Motor neuron (in vitro differentiated cells): ENCODE measurements at regions of chr2 and their contacts with region 1.

Region 1: DNA sequence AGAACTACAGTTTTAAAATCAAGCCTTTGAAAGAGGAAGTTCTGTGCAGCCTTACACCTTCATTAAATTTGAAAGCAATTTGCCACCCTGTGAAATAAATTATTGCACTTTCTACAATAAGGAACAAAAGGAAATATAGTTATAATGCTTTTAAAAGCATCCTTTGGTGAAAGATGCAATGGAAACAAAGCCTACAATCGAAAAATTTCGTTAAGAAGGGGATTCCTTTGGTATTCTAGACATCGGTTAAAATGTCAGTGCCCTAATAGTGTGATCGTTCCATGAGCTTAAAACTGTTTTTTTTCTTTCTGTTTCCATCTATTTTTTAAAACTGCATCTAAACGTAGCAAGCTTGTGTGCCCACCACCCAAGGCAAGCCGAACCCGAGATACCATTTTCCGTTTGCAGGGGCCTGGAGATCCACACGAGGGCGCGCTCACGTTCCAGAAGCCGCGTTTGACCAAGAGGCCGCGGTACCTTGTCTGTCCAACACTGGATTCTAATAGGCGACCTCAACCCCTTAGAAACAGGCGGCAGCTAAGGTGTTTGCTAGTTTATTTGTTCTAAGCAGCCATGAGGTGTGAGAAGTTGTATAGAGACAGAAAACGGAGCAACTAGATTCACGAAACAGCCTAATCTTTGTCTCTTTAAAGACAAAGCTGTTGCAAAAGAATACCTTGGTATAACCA is 4.0 kb downstream of the HOXD11 start:
- ATAC-seq: peak; percentile 0 to 55 (median 40)
- H3K4me3 ChIP-seq: no peak overlapping the region
- H3K27ac ChIP-seq: no peak overlapping the region
- H3K4me1 ChIP-seq: peaks cover 0 to 16% of the 10 kb centered on the region in 2 donors

Region 2: DNA sequence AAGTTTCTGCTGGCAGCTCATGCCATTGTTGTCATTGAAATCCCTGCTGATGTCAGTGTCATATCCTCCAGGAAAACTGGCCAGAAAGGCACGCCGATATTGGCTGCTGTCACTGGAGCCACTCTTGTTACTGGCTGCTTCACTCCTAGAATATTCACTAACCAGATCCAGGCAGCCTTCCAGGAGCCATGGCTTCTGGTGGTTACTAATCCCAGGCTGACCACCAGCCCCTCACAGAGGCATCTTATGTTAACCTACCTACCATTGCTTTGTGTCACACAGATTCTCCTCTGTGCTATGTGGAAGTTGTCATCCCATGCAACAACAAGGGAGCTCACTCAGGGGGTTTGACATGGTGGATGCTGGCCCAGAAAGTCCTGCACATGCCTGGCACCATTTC is 131.2 kb after region 1 on chr2:
- in situ Hi-C with region 1: no loop called
- ATAC-seq: no peak
- H3K4me3 ChIP-seq: no peak overlapping the region
- H3K27ac ChIP-seq: no peak overlapping the region
- H3K4me1 ChIP-seq: peaks cover 0 to 10% of the 10 kb centered on the region in 2 donors

Region 3: GRCh38 chr2:176814306-176815052 is 703.4 kb after region 1 on chr2:
- in situ Hi-C with region 1: loop called in 1 of 9 experiments (anchors 25 kb)
- ATAC-seq: no peak
- H3K4me3 ChIP-seq: no peak overlapping the region
- H3K27ac ChIP-seq: no peak overlapping the region
- H3K4me1 ChIP-seq: peaks cover 33 to 40% of the 10 kb centered on the region in 2 donors

Region 4: GRCh38 chr2:177763532-177764265 is 1652.6 kb after region 1 on chr2:
- in situ Hi-C with region 1: loop called in 2 of 9 experiments (anchors 25 kb)
- ATAC-seq: peak; percentile 86 to 98 (median 90)
- H3K4me3 ChIP-seq: no peak overlapping the region
- H3K27ac ChIP-seq: no peak overlapping the region
- H3K4me1 ChIP-seq: peaks cover 5 to 17% of the 10 kb centered on the region in 2 donors